ENCODE measurements at regions of chr3 and their contacts with region 1.

Region 1: GRCh38 chr3:71599416-71599815 is 15.9 kb upstream of the FOXP1 start:
- DNase-seq: no peak
- CTCF ChIP-seq: no peak

Region 2: DNA sequence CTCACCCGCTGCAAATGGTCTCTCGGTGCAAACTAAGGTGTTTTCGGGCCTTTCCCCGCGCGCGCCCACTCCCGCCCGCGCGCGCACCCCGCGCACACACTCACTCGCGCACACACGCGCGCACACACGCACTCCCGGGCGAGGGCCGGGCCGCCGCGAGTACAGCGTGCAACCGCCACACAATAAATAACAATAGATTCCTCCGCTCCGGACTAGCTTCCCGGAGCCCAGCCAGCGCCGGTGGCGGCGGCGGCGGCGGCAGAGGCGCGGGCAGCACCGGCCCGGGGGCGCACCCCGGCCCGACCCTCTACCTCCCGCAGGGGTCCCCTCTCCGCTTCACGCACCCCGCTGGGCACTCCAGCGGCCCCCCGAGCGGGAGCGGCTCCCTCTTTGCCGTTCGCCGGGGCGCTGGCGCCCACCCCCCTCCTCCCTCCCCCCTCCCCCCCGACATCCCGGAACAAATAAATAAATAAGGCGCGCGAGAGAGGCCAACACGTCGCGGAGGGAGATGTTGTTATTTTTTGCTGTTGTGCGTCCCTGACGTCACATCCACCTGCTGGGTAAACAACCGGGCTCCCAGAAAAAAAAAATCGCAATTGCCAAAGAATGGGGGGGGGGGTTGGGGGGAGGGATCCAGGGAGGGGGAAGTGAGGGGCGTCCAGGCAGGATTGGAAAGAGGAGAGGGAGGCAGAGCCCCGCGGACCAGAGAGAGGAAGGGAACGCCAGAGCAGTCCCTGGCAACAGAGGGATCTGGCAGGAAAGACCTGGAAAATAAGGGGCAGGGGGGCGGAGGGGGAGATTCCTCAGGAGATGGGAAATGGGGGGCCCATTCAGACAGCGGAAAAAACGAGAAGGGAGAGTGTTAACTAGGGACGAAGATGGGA is 15.6 kb before region 1 on chr3 and contains the start of gene FOXP1:
- CTCF ChIA-PET with region 1: interaction called, 10 read pairs
- POLR2A ChIA-PET with region 1: no interaction called
- DNase-seq: peak; percentile 27
- CTCF ChIP-seq: no peak